ENCODE measurements at regions of chr7 and their contacts with region 1.

Region 1: GRCh38 chr7:77258014-77258413 is 58.4 kb upstream of the FGL2 start:
- DNase-seq: no peak
- H3K4me3 ChIP-seq: no peak overlapping the region
- H3K27ac ChIP-seq: no peak overlapping the region
- H3K4me1 ChIP-seq: no peaks in the 10 kb centered on the region
- H3K27me3 ChIP-seq: no peaks in the 10 kb centered on the region
- CTCF ChIP-seq: no peak
- POLR2A ChIP-seq: no peak

Region 2: DNA sequence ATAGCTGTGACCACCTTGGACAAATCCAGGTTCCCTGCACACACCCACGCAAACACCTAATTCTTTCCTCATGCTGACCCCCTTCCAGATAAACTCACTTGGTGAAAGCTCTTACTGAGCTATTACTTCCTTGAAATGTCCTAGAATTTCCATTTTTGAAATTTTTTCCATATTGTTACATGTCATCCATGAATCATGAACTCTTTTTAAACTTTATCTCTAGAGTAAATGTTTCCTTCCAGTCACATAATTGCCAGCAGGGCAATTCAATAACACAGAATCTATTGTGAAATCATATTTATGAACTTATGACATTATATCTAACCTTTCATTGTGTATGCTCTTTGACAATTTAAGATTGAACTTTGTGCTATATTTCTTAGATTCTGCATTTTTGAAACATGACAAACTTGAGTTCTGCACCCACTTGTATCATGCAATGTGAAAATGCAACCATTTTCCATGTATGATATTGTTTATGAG is 31.6 kb before region 1 on chr7:
- intact Hi-C with region 1: no loop called
- DNase-seq: no peak
- H3K4me3 ChIP-seq: no peak overlapping the region
- H3K27ac ChIP-seq: peak overlapping the region in 1 of 2 donors; percentile 61
- H3K4me1 ChIP-seq: no peaks in the 10 kb centered on the region
- H3K27me3 ChIP-seq: no peaks in the 10 kb centered on the region
- CTCF ChIP-seq: no peak
- POLR2A ChIP-seq: no peak

Region 3: GRCh38 chr7:77315182-77315591 is 57.2 kb after region 1 on chr7:
- intact Hi-C with region 1: loop called (anchors 10 kb)
- DNase-seq: no peak
- H3K4me3 ChIP-seq: no peak overlapping the region
- H3K27ac ChIP-seq: no peak overlapping the region
- H3K4me1 ChIP-seq: no peaks in the 10 kb centered on the region
- H3K27me3 ChIP-seq: no peaks in the 10 kb centered on the region
- CTCF ChIP-seq: no peak
- POLR2A ChIP-seq: no peak

Region 4: GRCh38 chr7:77425101-77426051 is 167.4 kb after region 1 on chr7:
- intact Hi-C with region 1: loop called (anchors 10 kb)
- DNase-seq: no peak
- H3K4me3 ChIP-seq: no peak overlapping the region
- H3K27ac ChIP-seq: no peak overlapping the region
- H3K4me1 ChIP-seq: no peaks in the 10 kb centered on the region
- H3K27me3 ChIP-seq: no peaks in the 10 kb centered on the region
- CTCF ChIP-seq: no peak
- POLR2A ChIP-seq: no peak

Measured in breast epithelium (tissue), 4 donors.